ENCODE measurements at regions of chr12 and their contacts with region 1.

Region 1: GRCh38 chr12:6723607-6724396 is at the start of gene COPS7A:
- DNase-seq: peak; percentile 95

Region 2: DNA sequence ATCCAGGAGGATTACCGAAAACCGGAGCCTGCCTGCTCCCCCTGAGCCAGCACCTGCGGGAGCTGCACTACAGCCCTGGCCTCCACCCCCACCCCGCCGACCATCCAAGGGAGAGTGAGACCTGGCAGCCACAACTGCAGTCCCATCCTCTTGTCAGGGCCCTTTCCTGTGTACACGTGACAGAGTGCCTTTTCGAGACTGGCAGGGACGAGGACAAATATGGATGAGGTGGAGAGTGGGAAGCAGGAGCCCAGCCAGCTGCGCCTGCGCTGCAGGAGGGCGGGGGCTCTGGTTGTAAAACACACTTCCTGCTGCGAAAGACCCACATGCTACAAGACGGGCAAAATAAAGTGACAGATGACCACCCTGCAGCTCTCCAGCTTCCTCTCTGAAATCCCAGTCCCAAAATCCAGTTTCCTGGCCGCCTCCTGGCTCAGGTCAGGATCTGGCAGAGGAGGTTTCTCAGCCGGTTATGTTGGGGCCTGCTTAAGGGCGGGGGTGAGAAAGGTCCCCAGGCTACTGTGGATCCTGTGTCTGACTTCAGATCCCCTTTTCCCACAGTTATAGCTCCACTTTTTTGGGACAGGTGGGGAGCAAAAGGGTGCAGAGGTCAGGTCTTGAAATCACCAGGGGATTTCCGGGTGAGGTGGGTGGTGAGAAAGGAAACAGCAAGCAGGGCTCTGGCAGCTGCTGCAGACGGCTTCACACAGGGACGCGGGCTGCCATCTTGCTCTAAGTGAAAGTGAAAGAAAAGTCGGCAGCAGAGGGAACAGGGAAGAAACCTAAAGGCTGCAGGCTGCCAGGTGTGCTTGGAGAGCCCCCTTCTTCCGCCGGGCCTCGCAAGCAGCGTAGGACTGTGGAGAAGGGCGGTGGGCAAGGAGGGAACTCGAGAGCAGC is 272.2 kb before region 1 on chr12 and contains the start of gene TAPBPL:
- CTCF ChIA-PET with region 1: no interaction called
- POLR2A ChIA-PET with region 1: no interaction called
- DNase-seq: peak; percentile 53

Region 3: GRCh38 chr12:6470375-6471163 is 253.2 kb before region 1 on chr12 and contains the start of gene VAMP1:
- CTCF ChIA-PET with region 1: no interaction called
- POLR2A ChIA-PET with region 1: no interaction called
- DNase-seq: peak; percentile 96

Region 4: GRCh38 chr12:6688999-6689882 is 34.6 kb before region 1 on chr12 and contains the start of gene ZNF384:
- CTCF ChIA-PET with region 1: no interaction called
- POLR2A ChIA-PET with region 1: interaction called, 91 read pairs
- DNase-seq: peak; percentile 95

Region 5: DNA sequence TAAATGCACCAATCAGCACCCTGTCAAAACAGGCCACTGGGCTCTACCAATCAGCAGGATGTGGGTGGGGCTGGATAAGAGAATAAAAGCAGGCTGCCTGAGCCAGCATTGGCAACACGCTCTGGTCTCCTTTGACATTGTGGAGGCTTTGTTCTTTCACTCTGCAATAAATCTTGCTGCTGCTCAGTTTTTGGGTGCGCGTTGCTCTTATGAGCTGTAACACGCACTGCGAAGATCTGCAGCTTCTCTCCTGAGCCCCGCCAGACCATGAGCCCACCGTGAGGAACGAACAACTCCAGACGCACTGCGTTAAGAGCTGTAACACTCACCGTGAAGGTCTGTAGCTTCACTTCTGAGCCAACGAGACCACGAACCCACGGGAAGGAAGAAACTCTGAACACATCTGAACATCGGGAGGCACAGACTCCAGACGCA is 14.8 kb before region 1 on chr12:
- CTCF ChIA-PET with region 1: no interaction called
- POLR2A ChIA-PET with region 1: interaction called, 13 read pairs
- DNase-seq: no peak

Region 6: GRCh38 chr12:6764011-6764828 is 40.4 kb after region 1 on chr12:
- CTCF ChIA-PET with region 1: interaction called, 4 read pairs
- POLR2A ChIA-PET with region 1: interaction called, 22 read pairs
- DNase-seq: peak; percentile 94

Measured in HEK293T (cell line).